ENCODE measurements at regions of chr18 and their contacts with region 1.

Region 1: DNA sequence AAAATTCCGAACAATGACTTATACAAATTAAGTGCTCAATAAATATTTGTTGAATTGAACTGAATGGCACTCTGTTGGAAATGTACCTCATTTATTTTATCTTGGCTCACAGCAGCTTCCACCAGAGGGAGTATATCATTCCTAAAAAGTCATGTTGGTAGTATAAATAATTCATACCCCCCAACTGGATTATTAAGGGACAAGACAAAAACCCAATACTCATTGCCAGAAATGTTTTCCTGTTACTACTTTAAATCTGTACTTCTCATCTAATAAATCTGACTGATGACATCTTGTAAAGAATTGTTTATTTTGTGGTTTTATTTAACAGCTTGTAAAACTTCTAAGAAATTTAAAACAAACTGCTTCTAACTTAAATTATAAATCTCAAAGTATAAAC is 163.9 kb downstream of the CDH2 start:
- DNase-seq: no peak
- ATAC-seq: peak; percentile 62 to 75 (median 72)
- H3K4me3 ChIP-seq: no peak overlapping the region
- H3K27ac ChIP-seq: no peak overlapping the region
- H3K4me1 ChIP-seq: no peaks in the 10 kb centered on the region
- H3K27me3 ChIP-seq: no peaks in the 10 kb centered on the region
- CTCF ChIP-seq: peak; percentile 54 to 66 (median 58)
- POLR2A ChIP-seq: no peak

Region 2: DNA sequence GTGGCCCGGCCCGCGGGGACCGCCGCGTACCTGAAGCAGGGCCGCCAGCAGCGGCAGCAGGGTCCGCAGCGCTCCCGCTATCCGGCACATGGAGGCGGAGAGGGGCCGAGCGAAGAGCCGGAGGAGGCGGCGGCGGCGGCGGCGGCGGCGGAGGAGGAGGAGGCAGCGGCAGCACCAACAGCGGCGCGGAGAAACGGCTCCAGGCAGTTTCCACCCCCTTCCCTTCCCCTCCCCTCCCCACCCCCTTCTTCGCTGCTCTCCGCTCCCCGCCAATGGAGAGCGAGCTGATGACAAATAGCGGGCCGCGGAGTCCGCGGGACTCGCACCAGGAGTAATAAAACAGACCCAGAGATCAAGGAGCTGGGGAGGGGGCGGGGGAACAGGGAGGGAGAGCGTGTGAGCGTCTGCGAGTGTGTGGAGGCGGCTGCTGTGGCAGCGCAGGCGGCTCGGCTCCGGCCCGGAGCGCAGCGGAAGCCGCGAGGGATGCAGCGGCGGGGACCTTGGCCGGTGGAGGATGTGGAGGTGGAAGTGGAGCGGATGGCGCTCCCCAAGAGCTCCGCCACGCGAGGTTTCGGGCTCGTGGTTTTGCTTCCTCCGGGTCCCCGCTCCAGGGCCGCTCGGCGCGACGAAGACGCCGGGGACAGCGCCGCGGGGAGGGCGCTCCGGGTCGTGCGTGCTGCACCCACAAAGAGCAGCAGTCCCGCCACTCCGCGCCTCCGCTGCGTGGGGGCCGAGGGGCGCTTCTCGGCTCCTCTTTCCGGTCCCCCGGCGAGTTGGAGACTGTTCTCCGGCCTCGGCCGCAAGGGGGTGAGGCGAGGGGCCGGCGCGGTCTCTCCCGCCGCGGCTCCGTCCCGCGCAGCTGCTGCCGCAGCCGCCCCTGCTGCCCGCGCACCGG is 164.1 kb after region 1 on chr18 and contains the start of gene CDH2:
- intact Hi-C with region 1: loop called (anchors 10 kb)
- DNase-seq: peak; percentile 83 to 85 (median 85)
- ATAC-seq: peak; percentile 66 to 81 (median 74)
- H3K4me3 ChIP-seq: peak within 1 kb of the TSS; percentile 74 to 85 (median 81)
- H3K27ac ChIP-seq: peak within 1 kb of the TSS; percentile 74 to 83 (median 82)
- H3K4me1 ChIP-seq: peaks cover 0 to 21% (median 6%) of the 10 kb centered on the region in 4 donors
- H3K27me3 ChIP-seq: no peaks in the 10 kb centered on the region
- CTCF ChIP-seq: peak in 2 of 4 donors; percentile 19 to 26
- POLR2A ChIP-seq: peak; percentile 51
- total RNA-seq, gene CDH2: 32.3 to 46.8 (median 35.8) TPM

Region 3: GRCh38 chr18:28189400-28190239 is 176.6 kb after region 1 on chr18:
- intact Hi-C with region 1: loop called in 1 of 2 experiments (anchors 10 kb)
- DNase-seq: peak in 1 of 3 donors; percentile 62
- ATAC-seq: peak; percentile 87 to 90 (median 88)
- H3K4me3 ChIP-seq: no peak overlapping the region
- H3K27ac ChIP-seq: no peak overlapping the region
- H3K4me1 ChIP-seq: peaks cover 0 to 9% (median 0%) of the 10 kb centered on the region in 4 donors
- H3K27me3 ChIP-seq: no peaks in the 10 kb centered on the region
- CTCF ChIP-seq: peak; percentile 68 to 84 (median 80)
- POLR2A ChIP-seq: no peak

Measured in right lobe of liver (tissue), 6 donors.